ENCODE measurements at regions of chr7 and their contacts with region 1.

Region 1: DNA sequence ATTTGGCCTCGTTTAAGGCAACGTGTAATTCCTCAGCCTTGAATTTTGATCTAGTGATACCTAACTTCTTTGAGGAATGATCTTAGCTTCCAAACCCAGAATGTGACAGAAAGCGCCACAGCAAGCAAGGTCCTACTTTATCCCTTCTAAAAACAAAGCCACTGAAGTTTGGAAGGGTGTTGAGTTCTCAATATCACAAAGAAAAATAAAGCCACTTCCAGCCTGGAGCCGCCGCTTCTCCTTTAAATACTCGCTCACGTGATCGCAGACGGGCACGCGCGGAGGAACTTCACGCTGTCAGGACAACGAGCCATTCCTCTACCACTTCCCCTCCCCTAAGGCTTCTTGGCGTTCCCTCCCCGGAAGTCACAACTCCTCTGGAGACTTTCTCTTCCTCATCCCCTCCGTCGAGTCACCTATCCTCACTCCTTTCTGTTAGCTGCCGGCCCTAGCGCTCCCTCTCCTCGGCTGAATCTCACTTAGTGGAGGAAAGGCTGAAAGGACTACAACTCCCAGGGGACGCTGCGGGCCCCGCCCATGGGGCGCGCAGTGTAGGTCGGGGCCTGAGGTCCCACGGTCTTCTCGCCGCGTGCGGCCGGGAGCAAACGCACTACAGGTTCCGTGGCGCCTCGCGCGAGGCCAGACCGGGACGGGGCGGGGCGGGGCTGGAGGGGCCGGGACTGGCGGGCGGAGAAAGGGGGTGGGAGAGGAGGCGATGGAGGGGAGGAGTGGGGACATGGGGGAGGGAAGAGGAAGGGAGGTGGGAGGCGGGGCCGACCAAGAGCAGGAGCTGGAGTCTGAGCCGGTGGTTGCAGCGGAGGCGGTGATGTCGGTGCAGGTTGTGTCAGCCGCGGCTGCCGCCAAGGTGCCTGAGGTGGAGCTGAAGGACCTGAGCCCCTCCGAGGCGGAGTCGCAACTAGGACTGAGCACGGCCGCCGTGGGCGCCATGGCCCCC is at the start of gene AHCYL2:
- DNase-seq: peak; percentile 98
- ATAC-seq: peak; percentile 88
- H3K4me3 ChIP-seq: peak within 1 kb of the TSS; percentile 61 to 94 (median 81)
- H3K4me3 Mint-ChIP-seq: peak within 1 kb of the TSS; percentile 93
- H3K27ac ChIP-seq: peak within 1 kb of the TSS; percentile 90 to 94
- H3K27ac Mint-ChIP-seq: peak within 1 kb of the TSS; percentile 93
- H3K4me1 ChIP-seq: peaks cover 27% of the 10 kb centered on the region in 2 donors
- H3K4me1 Mint-ChIP-seq: peaks cover 35% of the 10 kb centered on the region
- H3K27me3 ChIP-seq: no peaks in the 10 kb centered on the region
- H3K27me3 Mint-ChIP-seq: no peaks in the 10 kb centered on the region
- CTCF ChIP-seq: no peak
- total RNA-seq, gene AHCYL2: 24.5 and 26.2 TPM in 2 replicates

Region 2: DNA sequence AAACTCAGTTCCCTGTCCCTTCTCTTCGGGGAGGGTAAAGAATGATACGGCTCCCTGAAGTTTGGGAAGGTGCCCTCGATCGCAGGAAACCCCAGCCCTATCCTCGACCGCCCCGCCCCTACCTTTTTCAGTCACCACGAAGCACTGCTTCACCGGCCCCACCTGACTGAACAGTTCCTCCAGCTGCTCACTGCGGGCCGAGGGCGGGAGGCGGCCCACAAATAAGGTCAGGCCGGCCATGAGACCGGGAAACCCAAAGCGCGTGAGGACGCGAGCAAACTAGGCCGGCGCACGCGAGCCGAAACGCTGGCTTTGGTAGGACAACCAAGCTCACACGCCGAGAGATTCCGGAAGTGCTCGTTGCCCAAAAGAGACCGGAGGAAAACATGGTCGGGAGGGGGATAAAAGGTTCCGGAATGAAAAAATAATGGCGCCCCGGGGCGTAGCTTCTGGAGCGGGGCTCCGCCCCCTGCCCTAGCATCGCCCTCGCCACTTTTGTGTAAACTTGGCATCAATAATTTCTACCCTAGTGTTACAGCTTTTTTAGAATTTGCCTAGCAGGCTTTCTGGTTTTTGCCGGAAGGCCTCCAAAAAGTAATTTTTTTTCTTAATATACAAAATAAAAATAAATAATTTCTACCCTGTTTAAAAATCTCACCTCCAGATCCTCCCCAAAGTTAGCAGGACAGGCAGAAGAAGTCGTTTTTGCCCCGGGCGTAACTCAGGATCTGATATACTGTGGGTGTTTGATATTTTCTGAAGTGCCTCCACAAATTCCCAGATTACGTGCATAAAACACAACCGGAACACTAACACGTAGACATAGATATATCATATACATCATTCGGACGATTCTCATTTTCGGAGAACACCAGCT is 880.7 kb before region 1 on chr7 and contains the start of gene RBM28:
- CTCF ChIA-PET with region 1: no interaction called
- POLR2A ChIA-PET with region 1: no interaction called
- intact Hi-C with region 1: loop called (anchors 10 kb)
- DNase-seq: peak; percentile 95
- ATAC-seq: peak; percentile 95
- H3K4me3 ChIP-seq: peak within 1 kb of the TSS; percentile 75 to 91 (median 81)
- H3K4me3 Mint-ChIP-seq: peak within 1 kb of the TSS; percentile 98
- H3K27ac ChIP-seq: peak within 1 kb of the TSS; percentile 71 to 76
- H3K27ac Mint-ChIP-seq: peak within 1 kb of the TSS; percentile 96
- H3K4me1 ChIP-seq: peaks cover 15 to 19% of the 10 kb centered on the region in 2 donors
- H3K4me1 Mint-ChIP-seq: peaks cover 28% of the 10 kb centered on the region
- H3K27me3 ChIP-seq: peaks cover 0 to 11% (median 1%) of the 10 kb centered on the region in 4 experiments
- H3K27me3 Mint-ChIP-seq: peaks cover 14% of the 10 kb centered on the region
- CTCF ChIP-seq: no peak
- total RNA-seq, gene RBM28: 46.2 and 52.8 TPM in 2 replicates

Region 3: DNA sequence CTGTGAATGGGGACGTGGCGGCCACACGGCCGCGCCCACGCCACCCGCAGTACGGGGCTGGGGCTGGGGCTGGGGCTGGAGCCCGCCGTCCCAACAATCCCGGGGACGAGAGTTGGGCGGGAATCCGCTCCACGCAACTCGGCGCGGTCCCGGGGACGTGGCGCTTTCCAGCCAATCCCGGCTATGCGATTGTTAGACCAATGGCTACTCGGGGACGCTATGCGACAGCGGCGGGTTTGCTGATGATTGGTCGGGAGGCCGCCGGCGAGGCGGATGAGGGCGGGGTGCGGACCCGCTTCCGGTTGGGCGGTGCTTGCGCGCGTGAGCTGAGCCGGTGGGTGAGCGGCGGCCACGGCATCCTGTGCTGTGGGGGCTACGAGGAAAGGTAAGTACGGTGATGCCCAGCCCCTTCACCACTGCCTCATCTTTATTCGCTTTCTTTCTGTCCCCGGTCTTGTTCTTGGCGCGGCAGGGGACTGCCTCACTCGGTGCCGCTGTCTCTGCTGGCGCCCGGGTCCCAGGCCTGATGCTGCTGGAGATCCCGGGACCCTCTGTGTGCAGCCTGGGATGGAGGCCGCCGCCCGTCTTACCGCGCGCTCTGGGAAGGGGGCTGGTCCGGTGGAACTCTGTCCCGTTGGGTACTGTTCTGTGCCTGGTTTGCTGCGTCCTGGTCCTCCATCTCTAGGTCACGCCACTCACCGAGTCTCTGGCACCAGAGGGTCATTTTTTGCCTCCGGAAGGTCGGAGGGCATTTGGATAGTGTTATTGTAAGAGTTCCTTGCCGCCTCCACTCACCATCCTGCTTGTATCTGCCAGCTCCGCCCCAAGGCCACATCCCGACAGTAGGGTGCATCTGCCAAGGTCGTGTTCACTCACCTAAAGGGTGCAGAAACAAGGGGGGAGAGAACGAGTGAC is 485.2 kb before region 1 on chr7 and contains the start of gene CALU:
- CTCF ChIA-PET with region 1: no interaction called
- POLR2A ChIA-PET with region 1: no interaction called
- intact Hi-C with region 1: loop called (anchors 1 kb)
- DNase-seq: peak; percentile 93
- ATAC-seq: peak; percentile 96
- H3K4me3 ChIP-seq: peak within 1 kb of the TSS; percentile 58 to 96 (median 88)
- H3K4me3 Mint-ChIP-seq: peak within 1 kb of the TSS; percentile 100
- H3K27ac ChIP-seq: peak within 1 kb of the TSS; percentile 67 to 83
- H3K27ac Mint-ChIP-seq: peak within 1 kb of the TSS; percentile 93
- H3K4me1 ChIP-seq: peaks cover 34 to 48% of the 10 kb centered on the region in 2 donors
- H3K4me1 Mint-ChIP-seq: peaks cover 41% of the 10 kb centered on the region
- H3K27me3 ChIP-seq: no peaks in the 10 kb centered on the region
- H3K27me3 Mint-ChIP-seq: no peaks in the 10 kb centered on the region
- CTCF ChIP-seq: no peak
- total RNA-seq, gene CALU: 11.2 and 12.4 TPM in 2 replicates

Region 4: GRCh38 chr7:128954830-128955802 is 269.4 kb before region 1 on chr7:
- CTCF ChIA-PET with region 1: no interaction called
- POLR2A ChIA-PET with region 1: no interaction called
- intact Hi-C with region 1: no loop called
- DNase-seq: peak; percentile 82
- ATAC-seq: peak; percentile 85
- H3K4me3 ChIP-seq: peak overlapping the region in 4 of 5 experiments; percentile 4 to 56 (median 33)
- H3K4me3 Mint-ChIP-seq: peak overlapping the region; percentile 80
- H3K27ac ChIP-seq: peak overlapping the region; percentile 85 to 92
- H3K27ac Mint-ChIP-seq: peak overlapping the region; percentile 95
- H3K4me1 ChIP-seq: peaks cover 17 to 21% of the 10 kb centered on the region in 2 donors
- H3K4me1 Mint-ChIP-seq: peaks cover 49% of the 10 kb centered on the region
- H3K27me3 ChIP-seq: no peaks in the 10 kb centered on the region
- H3K27me3 Mint-ChIP-seq: no peaks in the 10 kb centered on the region
- CTCF ChIP-seq: peak; percentile 48

Region 5: DNA sequence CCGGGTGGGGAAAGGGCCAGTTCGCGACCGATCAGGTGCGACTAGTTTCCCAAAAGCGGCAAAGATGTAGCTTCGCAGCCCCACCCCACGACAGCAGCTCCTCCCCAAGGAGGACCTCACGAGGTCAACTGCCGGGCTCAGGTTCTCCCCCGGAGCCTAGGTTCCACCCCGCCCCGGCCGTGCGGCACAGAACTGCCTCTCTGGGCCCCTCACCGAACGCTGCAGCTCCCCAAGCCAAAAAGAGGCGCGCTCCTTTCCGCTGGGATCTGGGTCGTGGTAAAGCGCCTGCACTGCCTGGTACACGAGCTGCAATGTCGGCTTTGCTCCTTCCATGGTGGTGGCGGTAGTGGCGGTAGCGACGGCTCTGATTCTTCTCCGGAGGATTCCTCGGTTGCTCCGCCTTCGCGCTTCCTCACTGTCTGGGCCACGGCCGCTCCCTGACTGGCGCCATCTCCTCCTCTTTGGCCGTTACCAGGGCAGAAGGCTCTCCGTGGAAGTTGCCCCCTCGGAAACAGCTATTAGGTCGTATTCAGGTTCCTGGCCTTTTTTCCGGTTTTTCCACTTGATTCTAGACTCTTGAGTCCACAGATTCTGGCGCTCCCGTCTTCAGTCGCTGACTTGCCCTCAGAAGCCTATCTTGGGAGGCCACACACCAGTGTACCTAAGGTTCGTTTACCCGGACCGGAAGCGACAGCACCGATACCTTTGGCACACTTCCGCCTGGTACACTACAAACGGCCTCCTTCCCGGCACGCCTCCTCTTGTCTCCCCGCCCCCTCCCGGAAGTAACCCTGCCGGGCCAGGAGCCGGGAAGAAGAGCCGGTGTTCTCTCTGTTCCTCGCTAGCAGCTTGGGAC is 169.9 kb before region 1 on chr7 and contains the start of gene TNPO3:
- CTCF ChIA-PET with region 1: no interaction called
- POLR2A ChIA-PET with region 1: no interaction called
- intact Hi-C with region 1: loop called (anchors 1 kb)
- DNase-seq: peak; percentile 94
- ATAC-seq: peak; percentile 81
- H3K4me3 ChIP-seq: peak within 1 kb of the TSS; percentile 72 to 99 (median 92)
- H3K4me3 Mint-ChIP-seq: peak within 1 kb of the TSS; percentile 98
- H3K27ac ChIP-seq: peak within 1 kb of the TSS; percentile 90 to 96
- H3K27ac Mint-ChIP-seq: peak within 1 kb of the TSS; percentile 99
- H3K4me1 ChIP-seq: peaks cover 31 to 33% of the 10 kb centered on the region in 2 donors
- H3K4me1 Mint-ChIP-seq: peaks cover 42% of the 10 kb centered on the region
- H3K27me3 ChIP-seq: no peaks in the 10 kb centered on the region
- H3K27me3 Mint-ChIP-seq: no peaks in the 10 kb centered on the region
- CTCF ChIP-seq: no peak
- total RNA-seq, gene TNPO3: 47.8 and 48.3 TPM in 2 replicates

Region 6: DNA sequence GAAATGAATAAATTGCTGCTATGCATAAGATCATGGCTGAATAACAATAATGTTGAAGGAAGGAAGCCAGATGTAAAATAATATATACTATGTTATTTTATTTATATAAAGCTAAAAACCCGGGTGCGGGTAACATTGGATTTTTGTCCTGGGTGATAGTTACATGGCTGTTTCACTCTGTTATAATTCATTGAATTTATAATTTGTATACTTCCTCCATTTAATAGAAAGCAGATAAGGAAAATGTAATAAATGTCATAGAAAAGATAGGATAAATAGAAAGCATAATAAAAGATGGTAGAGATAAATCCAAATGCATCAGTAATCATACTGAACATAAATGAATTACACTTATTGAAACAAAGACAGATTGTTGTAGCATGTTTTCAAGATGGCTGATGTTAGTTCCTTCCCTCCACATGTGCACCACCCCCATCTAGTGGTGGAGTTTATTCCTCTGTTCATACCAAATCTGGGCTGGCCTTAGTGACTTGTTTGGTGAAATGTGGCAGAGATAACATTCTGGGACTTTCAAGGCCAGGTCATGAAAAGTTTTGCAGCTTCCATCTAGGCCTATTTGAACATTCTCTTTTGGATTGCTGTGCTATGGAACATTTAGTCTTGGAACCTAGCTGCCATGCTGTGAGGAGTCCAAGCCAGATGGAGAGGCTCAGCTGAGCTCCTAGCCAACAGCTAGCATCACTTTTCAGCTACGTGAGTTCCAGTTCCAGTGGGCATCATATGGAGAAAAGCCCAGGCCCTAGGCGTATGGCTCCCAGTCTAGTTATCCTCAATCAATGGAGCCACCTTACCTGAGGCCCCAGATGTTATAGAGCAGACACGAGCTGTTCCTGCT is 47.2 kb after region 1 on chr7:
- CTCF ChIA-PET with region 1: interaction called, 265 read pairs
- POLR2A ChIA-PET with region 1: no interaction called
- intact Hi-C with region 1: loop called (anchors 1 kb)
- DNase-seq: peak; percentile 83
- ATAC-seq: peak; percentile 89
- H3K4me3 ChIP-seq: peak overlapping the region in 1 of 5 experiments; percentile 11
- H3K4me3 Mint-ChIP-seq: peak overlapping the region; percentile 64
- H3K27ac ChIP-seq: no peak overlapping the region
- H3K27ac Mint-ChIP-seq: no peak overlapping the region
- H3K4me1 ChIP-seq: peaks cover 11 to 13% of the 10 kb centered on the region in 2 donors
- H3K4me1 Mint-ChIP-seq: peaks cover 18% of the 10 kb centered on the region
- H3K27me3 ChIP-seq: no peaks in the 10 kb centered on the region
- H3K27me3 Mint-ChIP-seq: no peaks in the 10 kb centered on the region
- CTCF ChIP-seq: peak; percentile 91

Region 7: DNA sequence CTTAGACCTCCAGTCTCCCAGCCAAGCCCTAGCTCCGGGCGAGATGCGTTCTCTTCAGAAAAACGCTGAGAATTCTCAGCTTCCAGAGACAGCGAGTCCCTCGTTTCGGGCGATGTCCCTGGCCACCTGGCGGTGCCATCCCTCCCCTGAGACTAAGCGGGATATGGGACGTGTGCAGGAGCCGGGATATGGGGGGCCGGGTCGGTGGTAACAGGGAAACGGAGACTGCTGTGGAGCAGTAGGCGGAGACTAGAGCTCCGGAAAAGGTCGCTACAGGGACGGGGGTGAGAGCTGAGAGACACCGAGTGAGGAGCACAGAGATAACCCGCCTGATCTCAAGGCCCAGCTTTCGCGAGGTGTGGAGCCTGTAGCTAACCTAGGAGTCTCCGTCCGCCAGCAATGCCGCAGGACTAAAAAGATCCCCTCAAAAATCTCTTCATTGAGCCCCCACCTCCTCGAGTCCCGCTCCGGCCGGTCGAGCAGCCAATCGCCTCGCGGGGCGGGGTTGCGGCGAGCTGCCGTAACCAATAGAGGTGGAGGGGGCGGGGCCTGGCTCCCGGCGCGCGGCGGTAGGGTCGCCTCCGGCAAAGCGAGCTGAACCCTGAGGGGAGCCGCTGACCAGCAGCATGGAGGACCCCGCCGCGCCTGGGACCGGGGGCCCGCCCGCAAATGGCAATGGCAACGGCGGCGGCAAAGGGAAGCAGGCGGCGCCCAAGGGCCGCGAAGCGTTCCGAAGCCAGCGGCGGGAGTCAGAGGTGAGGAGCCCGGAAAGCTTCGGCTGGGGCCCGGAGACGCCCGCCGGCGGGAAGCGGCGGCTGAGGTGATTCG is 209.5 kb after region 1 on chr7 and contains the start of gene STRIP2:
- CTCF ChIA-PET with region 1: no interaction called
- POLR2A ChIA-PET with region 1: no interaction called
- intact Hi-C with region 1: loop called (anchors 2 kb)
- DNase-seq: peak; percentile 90
- ATAC-seq: peak; percentile 97
- H3K4me3 ChIP-seq: peak within 1 kb of the TSS; percentile 25 to 90 (median 74)
- H3K4me3 Mint-ChIP-seq: peak within 1 kb of the TSS; percentile 95
- H3K27ac ChIP-seq: peak within 1 kb of the TSS in 1 of 2 donors; percentile 56
- H3K27ac Mint-ChIP-seq: peak within 1 kb of the TSS; percentile 26
- H3K4me1 ChIP-seq: peaks cover 16 to 22% of the 10 kb centered on the region in 2 donors
- H3K4me1 Mint-ChIP-seq: peaks cover 22% of the 10 kb centered on the region
- H3K27me3 ChIP-seq: peaks cover 0 to 36% (median 24%) of the 10 kb centered on the region in 4 experiments
- H3K27me3 Mint-ChIP-seq: peaks cover 34% of the 10 kb centered on the region
- CTCF ChIP-seq: peak; percentile 23
- total RNA-seq, gene STRIP2: 0.39 and 0.79 TPM in 2 replicates

Region 8: GRCh38 chr7:130668257-130669084 is 1443.9 kb after region 1 on chr7 and contains the start of gene COPG2:
- CTCF ChIA-PET with region 1: no interaction called
- POLR2A ChIA-PET with region 1: no interaction called
- intact Hi-C with region 1: loop called (anchors 2 kb)
- DNase-seq: peak; percentile 92
- ATAC-seq: peak; percentile 91
- H3K4me3 ChIP-seq: peak within 1 kb of the TSS; percentile 69 to 83 (median 74)
- H3K4me3 Mint-ChIP-seq: peak within 1 kb of the TSS; percentile 96
- H3K27ac ChIP-seq: peak within 1 kb of the TSS in 1 of 2 donors; percentile 66
- H3K27ac Mint-ChIP-seq: peak within 1 kb of the TSS; percentile 90
- H3K4me1 ChIP-seq: peaks cover 10 to 11% of the 10 kb centered on the region in 2 donors
- H3K4me1 Mint-ChIP-seq: peaks cover 15% of the 10 kb centered on the region
- H3K27me3 ChIP-seq: no peaks in the 10 kb centered on the region
- H3K27me3 Mint-ChIP-seq: peaks cover 11% of the 10 kb centered on the region
- CTCF ChIP-seq: no peak
- total RNA-seq, gene COPG2: 13.4 and 14.7 TPM in 2 replicates